A673 (cell line): ENCODE measurements at regions of chr14 and their contacts with region 1.

Region 1: DNA sequence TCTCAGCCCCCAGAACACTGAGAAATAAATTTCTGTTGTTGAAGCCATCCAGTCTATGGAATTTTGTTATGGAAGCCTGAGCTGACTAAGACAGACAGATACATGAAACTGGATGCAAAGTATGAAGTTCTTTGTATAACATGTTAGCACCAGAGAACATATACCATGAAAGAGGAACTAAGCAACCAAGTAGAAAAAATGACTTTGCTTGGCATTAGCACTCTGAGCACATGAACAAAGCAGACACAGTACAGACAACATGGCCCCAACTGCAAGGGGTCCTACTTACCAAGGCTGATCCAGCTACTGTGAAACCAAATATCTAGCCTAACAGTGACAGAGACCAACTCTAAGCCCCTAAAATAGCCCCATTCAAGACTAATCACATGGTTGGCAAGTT is 13.8 kb downstream of the EXOC5 start:
- DNase-seq: no peak
- H3K4me3 ChIP-seq: no peak overlapping the region
- H3K27ac ChIP-seq: no peak overlapping the region
- H3K4me1 ChIP-seq: peaks cover 8% of the 10 kb centered on the region
- H3K27me3 ChIP-seq: no peaks in the 10 kb centered on the region
- CTCF ChIP-seq: no peak

Region 2: DNA sequence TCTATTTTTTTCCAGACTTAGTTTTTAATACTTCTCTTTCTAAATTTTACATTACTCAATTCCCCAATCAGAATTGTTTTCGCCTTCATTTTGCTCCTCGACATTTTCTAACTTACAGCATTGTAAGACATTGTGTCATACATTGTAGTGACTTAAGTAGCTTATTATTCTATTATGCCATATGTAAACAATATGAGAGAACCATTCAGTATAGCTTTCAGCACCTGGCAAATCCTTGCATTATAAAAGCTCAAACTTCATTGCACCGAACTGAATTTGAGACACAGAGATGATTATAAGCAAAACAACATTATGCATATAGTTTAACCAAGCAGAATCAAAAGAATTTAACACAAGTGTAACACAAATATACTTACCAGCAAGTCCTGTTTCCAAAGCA is 33.0 kb before region 1 on chr14:
- CTCF ChIA-PET with region 1: no interaction called
- POLR2A ChIA-PET with region 1: no interaction called
- intact Hi-C with region 1: loop called (anchors 5 kb)
- DNase-seq: no peak
- H3K4me3 ChIP-seq: no peak overlapping the region
- H3K27ac ChIP-seq: no peak overlapping the region
- H3K4me1 ChIP-seq: no peaks in the 10 kb centered on the region
- H3K27me3 ChIP-seq: no peaks in the 10 kb centered on the region
- CTCF ChIP-seq: no peak

Region 3: GRCh38 chr14:57652769-57653168 is 397.9 kb after region 1 on chr14:
- CTCF ChIA-PET with region 1: no interaction called
- POLR2A ChIA-PET with region 1: no interaction called
- intact Hi-C with region 1: no loop called
- DNase-seq: no peak
- H3K4me3 ChIP-seq: no peak overlapping the region
- H3K27ac ChIP-seq: no peak overlapping the region
- H3K4me1 ChIP-seq: no peaks in the 10 kb centered on the region
- H3K27me3 ChIP-seq: no peaks in the 10 kb centered on the region
- CTCF ChIP-seq: no peak

Region 4: DNA sequence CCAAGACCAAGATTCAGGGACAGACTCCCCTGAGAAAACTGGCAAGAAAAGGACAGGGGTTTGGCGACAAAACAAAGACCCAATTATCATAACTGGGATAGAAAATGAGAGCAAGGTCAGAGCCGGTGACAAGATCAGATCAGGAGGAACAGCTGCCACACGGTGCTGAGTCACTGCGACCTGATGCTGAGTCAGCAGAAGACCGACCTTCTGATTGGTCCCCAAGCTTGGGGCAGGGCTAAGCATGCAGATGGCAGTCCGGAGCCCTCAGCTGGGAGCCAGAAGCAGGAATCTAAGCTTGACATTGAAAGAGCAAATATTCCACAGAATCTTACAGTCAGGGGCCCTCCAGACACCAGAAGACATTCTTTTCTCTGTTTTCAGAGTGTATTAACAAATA is 916.2 kb after region 1 on chr14:
- CTCF ChIA-PET with region 1: no interaction called
- POLR2A ChIA-PET with region 1: interaction called, 17 read pairs
- intact Hi-C with region 1: no loop called
- DNase-seq: peak; percentile 88
- H3K4me3 ChIP-seq: no peak overlapping the region
- H3K27ac ChIP-seq: no peak overlapping the region
- H3K4me1 ChIP-seq: peaks cover 12% of the 10 kb centered on the region
- H3K27me3 ChIP-seq: no peaks in the 10 kb centered on the region
- CTCF ChIP-seq: no peak